ENCODE measurements at regions of chr4 and their contacts with region 1.

Region 1: DNA sequence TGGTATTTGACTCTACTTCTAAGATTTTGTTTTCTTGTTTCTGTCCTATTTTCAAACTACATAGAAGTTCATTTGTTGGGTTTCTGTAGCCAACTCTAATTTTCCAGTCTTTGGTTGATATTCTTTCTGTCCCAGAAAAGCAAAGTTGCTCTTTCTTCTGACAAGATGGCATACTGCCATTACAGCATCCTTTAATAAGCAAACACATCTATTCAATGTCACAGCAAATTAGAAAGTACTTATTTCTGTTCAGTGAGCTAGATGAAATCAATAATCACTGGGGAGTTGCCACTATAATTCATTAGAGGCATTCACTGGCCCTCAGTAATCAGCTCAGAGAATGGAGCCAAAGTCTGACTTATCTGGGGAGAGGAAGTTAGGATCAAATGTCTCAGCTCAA is 1258.0 kb upstream of the IGFBP7 start:
- DNase-seq: no peak
- ATAC-seq: no peak
- H3K4me3 ChIP-seq: no peak overlapping the region
- H3K4me3 Mint-ChIP-seq: no peak overlapping the region
- H3K27ac ChIP-seq: no peak overlapping the region
- H3K27ac Mint-ChIP-seq: no peak overlapping the region
- H3K4me1 ChIP-seq: no peaks in the 10 kb centered on the region
- H3K4me1 Mint-ChIP-seq: no peaks in the 10 kb centered on the region
- H3K27me3 ChIP-seq: no peaks in the 10 kb centered on the region
- H3K27me3 Mint-ChIP-seq: no peaks in the 10 kb centered on the region
- CTCF ChIP-seq: no peak

Region 2: GRCh38 chr4:58587856-58588255 is 219.6 kb after region 1 on chr4:
- CTCF ChIA-PET with region 1: no interaction called
- POLR2A ChIA-PET with region 1: no interaction called
- intact Hi-C with region 1: no loop called
- DNase-seq: no peak
- ATAC-seq: no peak
- H3K4me3 ChIP-seq: no peak overlapping the region
- H3K4me3 Mint-ChIP-seq: no peak overlapping the region
- H3K27ac ChIP-seq: no peak overlapping the region
- H3K27ac Mint-ChIP-seq: no peak overlapping the region
- H3K4me1 ChIP-seq: no peaks in the 10 kb centered on the region
- H3K4me1 Mint-ChIP-seq: no peaks in the 10 kb centered on the region
- H3K27me3 ChIP-seq: no peaks in the 10 kb centered on the region
- H3K27me3 Mint-ChIP-seq: no peaks in the 10 kb centered on the region
- CTCF ChIP-seq: no peak

Region 3: GRCh38 chr4:59161249-59161648 is 793.0 kb after region 1 on chr4:
- CTCF ChIA-PET with region 1: no interaction called
- POLR2A ChIA-PET with region 1: no interaction called
- intact Hi-C with region 1: loop called in 1 of 2 experiments (anchors 5 kb)
- DNase-seq: no peak
- ATAC-seq: no peak
- H3K4me3 ChIP-seq: no peak overlapping the region
- H3K4me3 Mint-ChIP-seq: no peak overlapping the region
- H3K27ac ChIP-seq: no peak overlapping the region
- H3K27ac Mint-ChIP-seq: no peak overlapping the region
- H3K4me1 ChIP-seq: no peaks in the 10 kb centered on the region
- H3K4me1 Mint-ChIP-seq: no peaks in the 10 kb centered on the region
- H3K27me3 ChIP-seq: no peaks in the 10 kb centered on the region
- H3K27me3 Mint-ChIP-seq: no peaks in the 10 kb centered on the region
- CTCF ChIP-seq: no peak

Region 4: GRCh38 chr4:59689149-59689548 is 1320.9 kb after region 1 on chr4:
- CTCF ChIA-PET with region 1: no interaction called
- POLR2A ChIA-PET with region 1: no interaction called
- intact Hi-C with region 1: no loop called
- DNase-seq: no peak
- ATAC-seq: no peak
- H3K4me3 ChIP-seq: no peak overlapping the region
- H3K4me3 Mint-ChIP-seq: no peak overlapping the region
- H3K27ac ChIP-seq: no peak overlapping the region
- H3K27ac Mint-ChIP-seq: no peak overlapping the region
- H3K4me1 ChIP-seq: no peaks in the 10 kb centered on the region
- H3K4me1 Mint-ChIP-seq: no peaks in the 10 kb centered on the region
- H3K27me3 ChIP-seq: no peaks in the 10 kb centered on the region
- H3K27me3 Mint-ChIP-seq: no peaks in the 10 kb centered on the region
- CTCF ChIP-seq: no peak

Measured in CD8-positive, alpha-beta T cell (primary cell).